Endothelial cell of umbilical vein (primary cell): ENCODE measurements at regions of chr4 and their contacts with region 1.

Region 1: GRCh38 chr4:20251796-20252655 is at the start of gene SLIT2:
- DNase-seq: peak; percentile 87
- H3K4me3 ChIP-seq: peak within 1 kb of the TSS; percentile 69 to 80 (median 79)
- H3K27ac ChIP-seq: peak within 1 kb of the TSS; percentile 3
- H3K4me1 ChIP-seq: peaks cover 36% of the 10 kb centered on the region
- H3K27me3 ChIP-seq: no peaks in the 10 kb centered on the region
- CTCF ChIP-seq: no peak
- POLR2A ChIP-seq: peak; percentile 95
- total RNA-seq, gene SLIT2: 22.2 and 28.2 TPM in 2 replicates

Region 2: DNA sequence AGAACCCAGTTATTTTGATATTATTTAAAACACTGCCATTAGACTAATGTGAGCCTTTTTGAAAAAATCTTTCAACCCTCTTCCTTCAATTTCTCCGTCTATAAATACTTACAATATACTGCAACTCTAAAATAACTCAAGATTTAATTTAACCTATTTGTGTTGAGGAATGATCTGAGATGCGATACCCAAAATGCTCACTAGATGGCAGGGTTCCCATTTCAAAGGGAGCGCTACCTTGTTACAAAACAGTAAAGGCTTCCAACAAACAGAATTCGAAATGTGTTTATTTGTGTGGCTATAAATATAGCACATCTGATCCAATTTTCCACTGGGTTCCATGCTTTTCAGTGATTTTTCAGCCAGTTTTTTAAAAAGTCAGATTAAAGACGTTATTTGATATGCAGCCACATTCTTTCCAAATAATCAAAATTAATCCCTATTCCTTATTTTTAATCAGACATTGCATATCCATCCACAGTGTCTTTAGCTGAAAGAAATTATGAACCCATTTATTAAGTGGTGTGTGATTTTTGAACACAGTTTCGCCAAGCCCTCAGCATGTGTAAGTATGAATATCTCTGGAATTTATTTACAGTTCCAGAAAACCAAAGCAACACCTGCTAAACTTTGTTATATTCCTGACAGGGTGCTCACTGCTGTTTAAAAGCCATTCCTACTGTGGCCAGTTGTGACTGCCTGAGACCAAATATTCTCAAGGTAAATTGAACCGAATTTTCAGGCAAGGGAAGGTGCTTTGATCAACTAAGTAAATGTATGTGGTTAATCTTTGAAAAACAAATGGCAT is 1562.5 kb before region 1 on chr4:
- CTCF ChIA-PET with region 1: interaction called, 5 read pairs
- POLR2A ChIA-PET with region 1: no interaction called
- dilution Hi-C with region 1: no loop called
- intact Hi-C with region 1: loop called (anchors 1 kb)
- DNase-seq: peak; percentile 77
- H3K4me3 ChIP-seq: no peak overlapping the region
- H3K27ac ChIP-seq: no peak overlapping the region
- H3K4me1 ChIP-seq: peaks cover 2% of the 10 kb centered on the region
- H3K27me3 ChIP-seq: no peaks in the 10 kb centered on the region
- CTCF ChIP-seq: peak; percentile 57 to 68
- POLR2A ChIP-seq: no peak

Region 3: GRCh38 chr4:19508442-19508841 is 743.6 kb before region 1 on chr4:
- CTCF ChIA-PET with region 1: interaction called, 29 read pairs
- POLR2A ChIA-PET with region 1: no interaction called
- dilution Hi-C with region 1: no loop called
- intact Hi-C with region 1: loop called (anchors 2 kb)
- DNase-seq: peak; percentile 71
- H3K4me3 ChIP-seq: no peak overlapping the region
- H3K27ac ChIP-seq: peak overlapping the region; percentile 35
- H3K4me1 ChIP-seq: peaks cover 11% of the 10 kb centered on the region
- H3K27me3 ChIP-seq: no peaks in the 10 kb centered on the region
- CTCF ChIP-seq: no peak
- POLR2A ChIP-seq: no peak

Region 4: DNA sequence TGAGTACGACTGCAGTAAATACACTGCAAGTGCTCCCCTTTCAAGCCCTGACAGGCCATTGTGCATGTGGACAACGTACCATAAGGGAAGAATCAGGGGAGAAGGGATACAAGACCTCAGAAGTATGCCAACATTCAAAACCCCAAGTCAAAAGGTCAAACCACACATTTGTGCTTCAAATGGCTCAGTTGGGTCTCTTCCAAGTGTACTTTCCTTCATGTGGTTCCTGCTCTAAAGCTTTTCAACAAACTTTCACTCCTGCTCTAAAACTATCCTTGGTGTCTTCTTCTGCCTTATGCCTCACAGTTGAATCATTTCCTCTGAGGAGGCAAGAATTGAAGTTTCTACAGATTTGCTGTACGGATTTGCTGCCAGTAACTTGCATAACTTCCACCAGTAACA is 306.0 kb before region 1 on chr4:
- CTCF ChIA-PET with region 1: interaction called, 14 read pairs
- POLR2A ChIA-PET with region 1: no interaction called
- dilution Hi-C with region 1: no loop called
- intact Hi-C with region 1: loop called (anchors 5 kb)
- DNase-seq: peak; percentile 84
- H3K4me3 ChIP-seq: no peak overlapping the region
- H3K27ac ChIP-seq: peak overlapping the region; percentile 19
- H3K4me1 ChIP-seq: peaks cover 18% of the 10 kb centered on the region
- H3K27me3 ChIP-seq: no peaks in the 10 kb centered on the region
- CTCF ChIP-seq: no peak
- POLR2A ChIP-seq: no peak

Region 5: DNA sequence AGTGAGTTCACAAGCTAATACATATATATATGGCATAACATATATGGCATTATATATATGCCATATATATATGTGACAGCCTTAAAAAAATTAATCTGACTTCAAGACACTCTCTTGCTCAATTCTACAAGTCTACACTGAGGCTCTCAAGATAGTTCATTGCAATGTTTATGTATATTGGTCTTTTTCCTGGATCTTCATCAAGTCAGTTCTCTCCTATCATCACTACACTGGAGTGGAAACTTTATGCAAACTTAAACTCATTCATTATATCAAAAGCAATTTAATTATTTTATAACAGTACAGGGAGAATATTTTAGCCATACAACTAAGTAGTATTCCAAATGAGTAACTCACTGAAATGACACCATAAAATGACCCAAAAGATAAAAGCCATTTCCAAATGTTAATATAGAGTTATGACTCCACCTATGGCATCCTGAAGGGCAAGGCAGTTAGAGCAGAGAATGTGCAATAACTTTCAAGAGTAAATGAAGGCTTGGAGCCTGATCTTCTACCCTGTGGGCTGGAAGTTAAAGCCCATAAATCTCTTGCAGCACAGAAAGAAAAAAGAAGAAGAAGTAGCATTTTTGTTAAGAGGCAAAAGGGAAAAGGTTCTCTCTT is 176.7 kb before region 1 on chr4:
- CTCF ChIA-PET with region 1: interaction called, 10 read pairs
- POLR2A ChIA-PET with region 1: no interaction called
- dilution Hi-C with region 1: no loop called
- intact Hi-C with region 1: no loop called
- DNase-seq: peak; percentile 16
- H3K4me3 ChIP-seq: no peak overlapping the region
- H3K27ac ChIP-seq: no peak overlapping the region
- H3K4me1 ChIP-seq: no peaks in the 10 kb centered on the region
- H3K27me3 ChIP-seq: no peaks in the 10 kb centered on the region
- CTCF ChIP-seq: no peak
- POLR2A ChIP-seq: no peak

Region 6: GRCh38 chr4:20422398-20422797 is 170.4 kb after region 1 on chr4:
- CTCF ChIA-PET with region 1: no interaction called
- POLR2A ChIA-PET with region 1: no interaction called
- dilution Hi-C with region 1: no loop called
- intact Hi-C with region 1: loop called (anchors 5 kb)
- DNase-seq: peak; percentile 78
- H3K4me3 ChIP-seq: no peak overlapping the region
- H3K27ac ChIP-seq: no peak overlapping the region
- H3K4me1 ChIP-seq: peaks cover 9% of the 10 kb centered on the region
- H3K27me3 ChIP-seq: no peaks in the 10 kb centered on the region
- CTCF ChIP-seq: peak; percentile 51 to 63
- POLR2A ChIP-seq: no peak